Activated CD8-positive, alpha-beta T cell treated with anti-CD3 and anti-CD28 coated beads for 36 hours (primary cell): ENCODE measurements at regions of chr15 and their contacts with region 1.

Region 1: DNA sequence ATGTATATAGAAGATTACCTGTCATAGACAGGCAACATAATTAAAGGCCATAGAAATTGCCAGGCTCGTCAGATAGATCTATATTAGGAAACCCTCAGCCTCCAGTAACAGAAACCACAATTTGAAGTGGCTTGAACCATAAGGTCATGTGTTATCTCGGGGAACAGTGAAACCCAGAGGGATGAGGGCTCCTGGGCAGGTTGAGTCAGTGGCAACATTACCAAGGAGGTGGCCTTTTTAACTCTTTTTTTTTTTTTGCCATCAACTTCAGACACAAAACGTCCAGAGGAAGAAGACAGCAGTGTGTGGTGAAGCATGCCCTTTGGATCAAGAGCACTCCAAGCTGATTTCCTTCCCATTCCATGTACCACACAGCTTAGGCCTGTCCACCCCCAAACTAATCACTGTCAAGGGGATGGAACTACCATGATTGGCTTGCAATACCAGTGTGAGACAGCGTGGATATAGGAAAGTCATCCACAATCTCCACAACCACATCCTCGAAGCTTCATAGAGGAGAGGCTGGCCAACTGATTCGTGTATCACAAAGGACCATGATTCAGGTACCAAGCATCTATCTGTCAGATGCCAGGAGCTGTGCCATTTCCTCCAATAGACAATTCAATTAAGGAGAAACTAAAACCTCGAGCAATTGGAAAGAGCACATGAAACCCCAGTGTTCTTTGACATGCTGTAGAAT is 999 bp upstream of the KIF7 start:
- DNase-seq: peak; percentile 42
- ATAC-seq: peak; percentile 65
- H3K4me3 Mint-ChIP-seq: peak overlapping the region; percentile 73
- H3K27ac Mint-ChIP-seq: no peak overlapping the region
- H3K4me1 Mint-ChIP-seq: peaks cover 18% of the 10 kb centered on the region
- H3K27me3 Mint-ChIP-seq: peaks cover 39% of the 10 kb centered on the region
- CTCF ChIP-seq: no peak

Region 2: DNA sequence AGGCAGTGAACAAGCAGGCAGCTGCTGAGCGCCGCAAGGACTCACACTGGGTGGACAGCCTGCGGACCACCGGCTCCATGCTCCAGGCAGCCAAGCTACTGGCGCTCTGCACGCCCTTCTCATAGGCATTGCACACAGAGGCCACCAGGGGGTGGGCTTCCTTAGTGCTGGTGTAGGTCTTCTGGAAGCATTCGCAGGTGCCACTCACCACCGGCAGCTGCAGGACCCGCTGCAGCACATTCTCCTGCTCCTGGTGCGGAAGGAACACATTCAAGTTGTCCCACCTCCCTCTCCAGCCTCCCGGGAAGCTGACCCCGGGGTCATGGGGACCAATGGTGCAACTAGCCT is 16.9 kb after region 1 on chr15:
- CTCF ChIA-PET with region 1: interaction called, 13 read pairs
- POLR2A ChIA-PET with region 1: no interaction called
- intact Hi-C with region 1: no loop called
- DNase-seq: peak; percentile 49
- ATAC-seq: peak; percentile 74
- H3K4me3 Mint-ChIP-seq: no peak overlapping the region
- H3K27ac Mint-ChIP-seq: no peak overlapping the region
- H3K4me1 Mint-ChIP-seq: peaks cover 3% of the 10 kb centered on the region
- H3K27me3 Mint-ChIP-seq: no peaks in the 10 kb centered on the region
- CTCF ChIP-seq: peak; percentile 53

Region 3: GRCh38 chr15:89690276-89691218 is 34.3 kb after region 1 on chr15 and contains the starts of genes PEX11A and WDR93:
- CTCF ChIA-PET with region 1: no interaction called
- POLR2A ChIA-PET with region 1: no interaction called
- intact Hi-C with region 1: no loop called
- DNase-seq: peak; percentile 80
- ATAC-seq: peak; percentile 96
- H3K4me3 Mint-ChIP-seq: peak within 1 kb of the TSS; percentile 84
- H3K27ac Mint-ChIP-seq: peak within 1 kb of the TSS; percentile 73
- H3K4me1 Mint-ChIP-seq: peaks cover 10% of the 10 kb centered on the region
- H3K27me3 Mint-ChIP-seq: peaks cover 2% of the 10 kb centered on the region
- CTCF ChIP-seq: no peak
- total RNA-seq, gene PEX11A: 3.3 to 4.0 TPM
- total RNA-seq, gene WDR93: not detected